Activated CD4-positive, alpha-beta T cell treated with anti-CD3 and anti-CD28 coated beads, Interleukin-2, amount 10 ng/mL, durations not matched to agents 7 days and 5 days (primary cell): ENCODE measurements at regions of chr10 and their contacts with region 1.

Region 1: GRCh38 chr10:13299437-13300287 is at the start of gene PHYH:
- DNase-seq: peak; percentile 79
- H3K4me3 Mint-ChIP-seq: peak within 1 kb of the TSS; percentile 80
- H3K27ac Mint-ChIP-seq: peak within 1 kb of the TSS; percentile 92
- H3K4me1 Mint-ChIP-seq: peaks cover 25% of the 10 kb centered on the region
- H3K27me3 Mint-ChIP-seq: no peaks in the 10 kb centered on the region
- total RNA-seq, gene PHYH: 9.8 to 12.0 TPM

Region 2: DNA sequence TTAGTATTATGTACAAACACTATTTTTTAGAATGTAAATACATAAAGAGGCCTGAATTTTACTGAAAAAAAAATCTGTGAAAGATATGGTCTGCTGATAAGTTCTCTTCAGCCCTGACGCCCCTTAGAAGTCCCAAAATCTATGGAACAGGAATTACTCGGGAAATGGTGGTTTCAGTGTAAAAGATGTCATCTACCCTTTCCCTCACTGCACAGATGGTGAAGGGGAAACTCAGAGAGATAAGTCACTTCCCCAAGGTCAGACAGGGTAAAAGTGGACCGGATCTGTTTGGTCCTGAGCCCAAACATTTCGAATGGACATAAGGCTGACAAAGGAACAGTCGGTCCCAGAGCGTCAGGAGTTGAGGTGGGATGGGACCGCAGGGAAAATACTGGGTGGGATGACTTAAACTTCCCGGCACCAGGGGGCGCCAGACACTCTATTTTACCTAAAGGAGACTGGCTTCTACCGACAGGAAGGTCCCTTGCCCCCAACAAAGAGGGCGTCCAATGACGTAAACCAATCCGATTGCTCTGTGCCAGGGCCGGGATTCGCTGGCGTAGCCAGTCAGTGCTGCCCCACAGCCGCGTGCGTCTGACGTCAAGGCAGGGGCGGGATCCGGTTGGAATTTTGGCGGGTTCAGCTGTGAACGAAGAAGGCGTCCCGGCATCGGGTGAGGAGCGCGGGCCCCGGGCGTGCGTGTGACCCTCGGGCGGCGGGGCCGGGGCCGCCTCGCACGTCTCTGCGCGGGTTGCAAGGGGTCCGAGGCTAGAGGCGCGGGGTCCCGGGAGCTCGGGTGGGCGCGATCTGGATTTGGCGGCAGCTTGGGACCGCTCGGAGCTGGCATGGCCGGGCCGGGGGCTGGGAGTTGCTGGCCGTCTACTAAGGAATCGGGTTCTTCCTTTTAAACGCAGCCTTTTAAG is 138.5 kb before region 1 on chr10 and contains the start of gene MCM10:
- CTCF ChIA-PET with region 1: interaction called, 15 read pairs
- POLR2A ChIA-PET with region 1: interaction called, 6 read pairs
- DNase-seq: peak; percentile 99
- H3K4me3 Mint-ChIP-seq: peak within 1 kb of the TSS; percentile 92
- H3K27ac Mint-ChIP-seq: peak within 1 kb of the TSS; percentile 90
- H3K4me1 Mint-ChIP-seq: peaks cover 46% of the 10 kb centered on the region
- H3K27me3 Mint-ChIP-seq: no peaks in the 10 kb centered on the region
- total RNA-seq, gene MCM10: 57.4 to 65.4 TPM

Region 3: GRCh38 chr10:13317474-13317873 is 17.8 kb after region 1 on chr10:
- CTCF ChIA-PET with region 1: interaction called, 32 read pairs
- POLR2A ChIA-PET with region 1: interaction called, 6 read pairs
- DNase-seq: no peak
- H3K4me3 Mint-ChIP-seq: no peak overlapping the region
- H3K27ac Mint-ChIP-seq: no peak overlapping the region
- H3K4me1 Mint-ChIP-seq: no peaks in the 10 kb centered on the region
- H3K27me3 Mint-ChIP-seq: no peaks in the 10 kb centered on the region

Region 4: DNA sequence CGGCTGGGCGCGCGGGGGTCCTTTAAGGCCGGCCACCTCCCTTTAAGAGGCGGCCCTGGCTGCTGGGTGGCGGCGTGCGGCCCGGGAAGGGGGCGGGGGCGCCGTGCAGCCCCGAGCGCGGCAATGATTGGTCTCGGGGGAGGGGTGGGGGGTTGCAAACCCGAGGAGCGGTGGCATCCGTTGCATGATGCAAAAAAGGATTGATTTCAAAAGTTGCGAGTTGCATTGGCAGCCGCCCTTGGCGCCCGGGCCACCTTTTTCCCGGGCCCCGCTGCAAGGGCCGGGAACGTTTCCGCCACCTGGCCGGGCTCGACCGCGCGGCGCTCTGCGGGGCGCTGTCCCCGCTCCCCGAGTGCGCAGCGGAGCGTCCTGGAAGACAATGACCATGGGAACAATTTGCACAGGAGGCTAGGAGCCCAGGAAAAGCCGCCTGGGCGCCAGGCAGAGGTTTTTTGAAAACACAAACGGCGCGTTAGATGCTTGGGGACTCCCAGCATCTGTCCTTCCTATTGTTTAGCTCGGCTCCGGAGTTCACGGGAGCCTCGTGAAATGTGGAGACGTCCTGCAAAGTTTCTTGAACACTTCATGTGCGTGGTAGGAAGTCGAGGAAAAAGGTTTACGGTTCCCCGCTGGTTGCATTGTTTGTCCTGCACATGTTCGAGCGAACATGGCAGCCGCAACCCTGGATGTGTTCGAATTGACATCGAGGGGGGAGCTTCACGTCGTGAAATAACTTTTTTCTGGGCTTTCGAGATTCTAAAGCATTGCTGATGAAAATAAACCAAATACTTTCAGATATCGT is 48.8 kb after region 1 on chr10 and contains the start of gene SEPHS1:
- CTCF ChIA-PET with region 1: interaction called, 19 read pairs
- POLR2A ChIA-PET with region 1: no interaction called
- DNase-seq: peak; percentile 88
- H3K4me3 Mint-ChIP-seq: peak within 1 kb of the TSS; percentile 91
- H3K27ac Mint-ChIP-seq: peak within 1 kb of the TSS; percentile 98
- H3K4me1 Mint-ChIP-seq: peaks cover 64% of the 10 kb centered on the region
- H3K27me3 Mint-ChIP-seq: no peaks in the 10 kb centered on the region
- total RNA-seq, gene SEPHS1: 74.4 to 74.9 TPM

Region 5: DNA sequence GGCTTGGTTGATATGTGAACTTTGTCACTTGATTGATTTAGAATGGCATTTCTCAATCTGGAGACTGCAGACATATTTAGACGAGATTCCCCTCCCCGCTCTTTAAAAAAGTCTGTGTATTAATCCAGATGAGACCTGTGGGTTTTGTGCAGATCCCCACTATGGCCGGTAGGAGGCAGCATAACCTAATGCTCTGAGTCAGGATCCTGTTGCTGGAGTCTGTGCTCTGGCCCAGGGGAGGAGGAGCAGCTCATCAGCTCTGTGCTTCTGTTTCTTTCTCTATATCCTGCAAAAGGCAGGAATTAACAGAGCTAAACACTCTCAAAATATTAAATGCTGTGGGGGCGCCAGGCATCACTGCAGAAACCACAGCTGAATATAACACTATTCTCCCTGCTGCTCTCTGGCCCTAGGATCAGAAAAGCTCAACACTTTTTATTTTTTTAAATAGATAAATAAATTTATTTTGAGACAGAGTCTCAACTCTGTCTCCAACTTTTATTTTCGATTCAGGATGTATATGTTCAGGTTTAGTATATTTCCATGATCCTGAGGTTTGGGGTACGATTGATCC is 72.3 kb after region 1 on chr10:
- CTCF ChIA-PET with region 1: no interaction called
- POLR2A ChIA-PET with region 1: no interaction called
- DNase-seq: peak; percentile 82
- H3K4me3 Mint-ChIP-seq: no peak overlapping the region
- H3K27ac Mint-ChIP-seq: no peak overlapping the region
- H3K4me1 Mint-ChIP-seq: peaks cover 3% of the 10 kb centered on the region
- H3K27me3 Mint-ChIP-seq: peaks cover 6% of the 10 kb centered on the region

Region 6: GRCh38 chr10:13382703-13383398 is 83.2 kb after region 1 on chr10:
- CTCF ChIA-PET with region 1: no interaction called
- POLR2A ChIA-PET with region 1: no interaction called
- DNase-seq: no peak
- H3K4me3 Mint-ChIP-seq: peak overlapping the region; percentile 9
- H3K27ac Mint-ChIP-seq: peak overlapping the region; percentile 14
- H3K4me1 Mint-ChIP-seq: peaks cover 11% of the 10 kb centered on the region
- H3K27me3 Mint-ChIP-seq: peaks cover 37% of the 10 kb centered on the region

Region 7: DNA sequence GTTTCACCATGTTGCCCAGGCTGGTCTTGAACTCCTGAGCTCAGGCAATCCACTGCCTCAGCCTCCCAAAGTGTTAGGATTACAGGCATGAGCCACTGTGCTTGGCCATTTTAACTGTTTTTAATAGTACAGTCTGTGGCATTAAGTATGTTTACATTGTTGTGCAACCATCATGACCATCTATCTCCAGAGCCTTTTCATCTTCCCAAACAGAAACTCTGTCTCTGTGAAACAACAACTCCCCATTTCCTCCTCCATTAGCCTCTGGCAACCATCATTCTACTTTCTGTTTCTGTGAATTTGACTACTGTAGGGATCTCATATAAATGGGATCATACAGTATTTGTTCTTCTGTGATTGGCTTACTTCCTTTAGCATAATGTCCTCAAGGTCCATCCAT is 96.7 kb after region 1 on chr10:
- CTCF ChIA-PET with region 1: no interaction called
- POLR2A ChIA-PET with region 1: no interaction called
- DNase-seq: no peak
- H3K4me3 Mint-ChIP-seq: no peak overlapping the region
- H3K27ac Mint-ChIP-seq: no peak overlapping the region
- H3K4me1 Mint-ChIP-seq: no peaks in the 10 kb centered on the region
- H3K27me3 Mint-ChIP-seq: peaks cover 9% of the 10 kb centered on the region

Region 8: DNA sequence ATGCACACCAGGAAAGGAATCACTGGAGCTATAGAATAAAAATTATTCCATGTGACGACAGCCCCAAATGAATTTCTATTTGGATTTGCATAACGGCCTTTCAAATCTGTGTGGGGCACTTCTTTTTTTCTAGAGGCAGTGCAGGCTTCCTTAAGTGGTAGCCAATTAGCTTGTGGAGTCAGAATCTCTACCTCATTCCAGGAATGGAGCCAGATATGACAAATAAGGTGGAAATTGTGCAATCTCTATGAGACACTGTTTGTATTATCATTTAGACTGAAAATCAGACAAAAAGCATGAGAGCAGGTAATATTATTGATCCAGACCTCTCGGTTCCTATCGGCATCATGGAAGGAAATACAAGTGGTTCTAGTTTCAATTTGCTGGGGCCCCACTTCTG is 150.4 kb after region 1 on chr10:
- CTCF ChIA-PET with region 1: no interaction called
- POLR2A ChIA-PET with region 1: no interaction called
- DNase-seq: no peak
- H3K4me3 Mint-ChIP-seq: no peak overlapping the region
- H3K27ac Mint-ChIP-seq: no peak overlapping the region
- H3K4me1 Mint-ChIP-seq: peaks cover 5% of the 10 kb centered on the region
- H3K27me3 Mint-ChIP-seq: peaks cover 5% of the 10 kb centered on the region